ENCODE measurements at regions of chr3 and their contacts with region 1.

Region 1: GRCh38 chr3:38521391-38521987 is 25.3 kb downstream of the EXOG start:
- DNase-seq: peak in 1 of 2 experiments; percentile 83
- H3K4me3 ChIP-seq: no peak overlapping the region
- H3K27ac ChIP-seq: no peak overlapping the region
- H3K4me1 ChIP-seq: peaks cover 0 to 19% (median 3%) of the 10 kb centered on the region in 4 experiments; a peak in 4 of 7 replicates
- H3K27me3 ChIP-seq: no peaks in the 10 kb centered on the region
- CTCF ChIP-seq: peak in 2 of 3 experiments; percentile 91 to 94; a peak in 3 of 4 replicates
- EP300 ChIP-seq: no peak
- POLR2A ChIP-seq: no peak
- RAD21 ChIP-seq: peak; percentile 91 to 94

Region 2: GRCh38 chr3:38496131-38496910 is 25.2 kb before region 1 on chr3 and contains the start of gene EXOG:
- CTCF ChIA-PET with region 1: interaction called, 17 read pairs
- POLR2A ChIA-PET with region 1: interaction called, 8 read pairs
- DNase-seq: peak; percentile 82 to 98
- H3K4me3 ChIP-seq: peak within 1 kb of the TSS; percentile 51 to 85 (median 69)
- H3K27ac ChIP-seq: peak within 1 kb of the TSS; percentile 88
- H3K4me1 ChIP-seq: peaks cover 0 to 2% (median 0%) of the 10 kb centered on the region in 4 experiments; a peak in 1 of 7 replicates
- H3K27me3 ChIP-seq: no peaks in the 10 kb centered on the region
- CTCF ChIP-seq: peak; percentile 75 to 96 (median 84)
- EP300 ChIP-seq: 0 out of 3 replicates have a peak, but pooled peaks of 1 of the 2 experiments have one; percentile 31
- POLR2A ChIP-seq: peak; percentile 72 to 88
- RAD21 ChIP-seq: peak; percentile 56 to 77; a peak in 3 of 4 replicates
- total RNA-seq, gene EXOG: 12.2 and 12.9 TPM in 2 replicates

Region 3: DNA sequence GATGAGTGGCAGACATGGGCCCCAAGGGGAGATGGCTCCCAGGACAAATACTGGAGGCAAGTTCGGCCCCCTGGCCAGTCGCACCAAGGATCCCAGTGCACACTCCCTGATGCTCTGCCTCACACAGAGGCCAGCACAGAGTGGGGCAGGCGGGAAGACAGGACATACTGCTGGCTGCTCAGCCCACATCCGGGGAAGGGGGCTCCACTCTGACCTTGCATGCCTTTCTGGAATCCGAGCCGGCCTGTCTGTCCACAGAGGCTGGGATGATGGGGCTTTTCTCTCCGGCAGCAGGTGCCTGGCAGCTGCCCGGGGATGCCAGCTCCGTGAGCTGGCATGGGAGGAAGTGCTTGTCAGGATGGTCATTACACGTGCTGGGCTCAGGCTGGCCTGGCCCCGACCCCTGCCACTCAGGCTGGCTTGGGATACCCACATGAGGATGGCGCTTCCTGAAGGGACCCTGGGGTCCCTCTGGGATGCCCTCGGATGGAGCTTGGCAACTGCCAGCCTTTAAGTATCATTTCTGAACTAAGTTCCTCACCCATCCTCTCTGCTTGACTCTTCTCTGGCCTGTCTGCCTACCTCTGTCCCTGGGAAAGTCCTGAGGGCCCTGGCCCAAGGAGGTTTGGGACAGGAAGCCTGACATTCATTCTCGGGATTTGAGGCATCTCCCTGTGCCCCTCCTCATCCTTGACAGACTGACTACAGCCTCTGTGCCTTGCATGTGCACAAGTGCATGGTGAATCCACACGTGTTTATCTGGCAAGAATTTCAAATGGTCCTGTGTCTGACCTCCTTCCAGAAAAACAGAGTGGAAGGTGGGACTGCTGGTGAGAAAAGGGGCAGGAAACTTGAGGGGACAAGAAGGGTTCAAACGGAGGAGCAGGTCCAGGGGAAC is 21.2 kb after region 1 on chr3:
- CTCF ChIA-PET with region 1: interaction called, 16 read pairs
- POLR2A ChIA-PET with region 1: interaction called, 3 read pairs
- DNase-seq: no peak
- H3K4me3 ChIP-seq: no peak overlapping the region
- H3K27ac ChIP-seq: no peak overlapping the region
- H3K4me1 ChIP-seq: no peaks in the 10 kb centered on the region; a peak in 1 of 7 replicates
- H3K27me3 ChIP-seq: no peaks in the 10 kb centered on the region
- CTCF ChIP-seq: no peak
- EP300 ChIP-seq: no peak
- POLR2A ChIP-seq: no peak
- RAD21 ChIP-seq: no peak

Region 4: DNA sequence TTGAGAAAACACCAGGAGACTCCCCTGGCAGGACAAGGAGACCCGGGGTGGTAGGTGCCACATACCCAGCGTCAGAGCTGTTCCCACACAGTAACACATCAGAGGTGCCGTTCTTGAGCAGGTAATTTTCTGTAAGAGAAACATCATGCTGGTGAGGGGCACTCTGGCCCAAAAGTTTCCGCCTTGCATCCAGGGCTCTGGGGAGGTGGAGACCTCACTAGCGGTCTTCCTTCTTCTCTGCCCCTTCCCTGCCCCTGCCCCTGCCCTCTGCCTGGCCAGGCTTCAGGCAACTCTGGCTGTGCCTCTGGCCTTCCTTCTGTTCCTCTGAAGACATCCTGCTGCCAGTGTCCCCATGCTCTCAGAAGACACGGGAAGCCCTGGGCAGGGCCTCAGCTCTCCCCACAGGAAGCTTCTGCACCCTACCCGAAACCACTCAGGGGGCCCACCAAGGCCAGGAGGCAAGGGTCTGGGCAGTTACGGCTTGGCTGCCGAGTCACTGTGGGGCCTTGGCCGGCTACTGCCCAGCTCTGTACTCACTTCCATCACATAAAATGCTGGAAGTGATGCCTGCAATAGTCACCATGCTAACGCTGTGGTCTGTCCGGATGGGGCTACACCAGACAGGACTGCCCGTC is 86.7 kb after region 1 on chr3:
- CTCF ChIA-PET with region 1: interaction called, 22 read pairs
- POLR2A ChIA-PET with region 1: no interaction called
- DNase-seq: no peak
- H3K4me3 ChIP-seq: no peak overlapping the region
- H3K27ac ChIP-seq: no peak overlapping the region
- H3K4me1 ChIP-seq: no peaks in the 10 kb centered on the region
- H3K27me3 ChIP-seq: no peaks in the 10 kb centered on the region
- CTCF ChIP-seq: no peak
- EP300 ChIP-seq: no peak
- POLR2A ChIP-seq: no peak
- RAD21 ChIP-seq: no peak

Region 5: GRCh38 chr3:38640661-38641452 is 119.4 kb after region 1 on chr3:
- CTCF ChIA-PET with region 1: interaction called, 21 read pairs
- POLR2A ChIA-PET with region 1: interaction called, 3 read pairs
- DNase-seq: peak in 1 of 2 experiments; percentile 88
- H3K4me3 ChIP-seq: peak overlapping the region in 1 of 4 experiments; percentile 31; a peak in 2 of 8 replicates
- H3K27ac ChIP-seq: no peak overlapping the region
- H3K4me1 ChIP-seq: peaks cover 10 to 35% (median 16%) of the 10 kb centered on the region in 4 experiments
- H3K27me3 ChIP-seq: no peaks in the 10 kb centered on the region; a peak in 1 of 7 replicates
- CTCF ChIP-seq: no peak
- EP300 ChIP-seq: peak in 1 of 2 experiments; percentile 10; a peak in 1 of 3 replicates
- POLR2A ChIP-seq: no peak
- RAD21 ChIP-seq: no peak

Region 6: DNA sequence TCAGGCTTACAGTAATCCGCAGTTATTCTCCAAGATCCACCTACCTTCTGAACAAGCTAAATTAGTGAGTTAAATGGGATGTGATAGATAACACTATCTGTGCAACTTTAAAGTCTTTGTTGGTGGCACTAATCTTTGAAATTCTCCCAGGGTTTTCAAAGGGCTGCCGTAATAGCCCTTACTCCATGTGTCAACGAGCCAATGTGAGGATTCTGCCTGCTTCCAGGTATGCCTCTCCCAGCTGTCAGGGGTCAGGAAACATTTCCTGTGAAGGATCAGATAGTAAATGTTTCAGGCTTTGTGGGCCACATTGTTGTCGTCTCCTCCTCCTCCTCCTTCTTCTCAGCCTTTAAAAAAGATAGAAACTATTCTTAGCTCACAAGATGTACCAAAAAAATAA is 148.2 kb after region 1 on chr3:
- CTCF ChIA-PET with region 1: interaction called, 11 read pairs
- POLR2A ChIA-PET with region 1: no interaction called
- DNase-seq: no peak
- H3K4me3 ChIP-seq: no peak overlapping the region
- H3K27ac ChIP-seq: no peak overlapping the region
- H3K4me1 ChIP-seq: no peaks in the 10 kb centered on the region
- H3K27me3 ChIP-seq: no peaks in the 10 kb centered on the region
- CTCF ChIP-seq: no peak
- EP300 ChIP-seq: no peak
- POLR2A ChIP-seq: no peak
- RAD21 ChIP-seq: no peak

Measured in H1 (cell line).